Cardiac septum (tissue), 1 donor: ENCODE measurements at regions of chr10 and their contacts with region 1.

Region 1: GRCh38 chr10:49407552-49408137 is 11.8 kb upstream of the DRGX start:
- DNase-seq: no peak

Region 2: DNA sequence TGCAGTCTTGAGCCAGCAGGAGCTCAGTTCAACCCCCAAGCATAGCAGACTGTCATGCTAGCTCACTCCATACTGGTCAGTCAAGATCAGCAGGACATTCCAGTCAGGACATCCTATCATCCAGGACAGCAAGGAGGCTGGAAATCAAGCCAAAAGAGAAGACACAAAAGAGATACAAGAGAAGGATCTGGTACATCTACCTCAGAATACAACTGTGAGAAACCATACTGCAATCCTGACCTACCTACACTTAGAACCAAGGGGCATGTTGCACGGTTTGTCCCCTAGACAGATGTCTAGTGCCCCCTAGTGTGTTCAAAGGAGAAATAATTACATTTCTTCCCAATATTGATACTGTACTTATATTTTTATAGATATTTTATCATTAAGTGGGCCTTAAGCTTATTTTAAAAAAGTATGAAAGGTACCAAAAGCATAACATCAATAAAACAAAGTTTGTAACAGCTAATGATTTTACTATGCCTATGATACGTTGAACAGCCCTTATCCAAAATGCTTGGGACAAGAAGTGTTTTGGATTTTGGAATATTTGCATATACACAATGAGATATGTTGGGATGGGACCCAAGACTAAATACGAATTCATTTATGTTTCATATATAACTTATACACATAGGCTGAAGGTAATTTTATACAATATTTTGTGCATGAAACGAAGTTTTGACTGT is 104.6 kb after region 1 on chr10:
- intact Hi-C with region 1: loop called (anchors 2 kb)
- DNase-seq: no peak

Region 3: DNA sequence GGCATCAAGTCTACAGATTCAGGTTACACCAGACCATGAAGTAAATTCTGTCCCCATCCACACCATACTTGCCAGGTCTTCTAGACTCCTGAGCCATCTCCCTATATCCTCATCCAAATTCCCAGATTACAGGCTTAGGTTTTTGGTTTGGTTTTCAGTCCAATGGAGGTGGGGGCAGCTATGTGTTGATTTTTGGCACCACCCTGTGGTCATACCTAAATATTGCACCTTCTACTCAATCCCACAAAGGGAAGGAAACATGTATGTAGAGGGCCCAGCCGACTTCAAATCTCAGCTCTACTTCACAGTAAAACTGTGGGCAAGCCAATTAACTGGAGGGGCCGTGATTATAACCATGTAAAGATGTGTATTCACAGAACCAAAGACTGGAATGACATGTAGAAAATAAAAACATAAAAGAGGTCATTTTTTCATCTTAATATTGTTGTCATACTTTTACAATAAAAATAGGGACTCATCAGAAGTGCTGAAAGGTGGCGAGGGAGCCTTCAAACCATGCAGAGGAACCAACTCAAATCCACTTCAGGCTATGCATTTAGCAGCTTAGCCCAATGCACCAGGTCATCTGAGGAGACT is 111.4 kb after region 1 on chr10:
- intact Hi-C with region 1: loop called (anchors 2 kb)
- DNase-seq: no peak